GM18951 (cell line): ENCODE measurements at regions of chr15 and their contacts with region 1.

Region 1: DNA sequence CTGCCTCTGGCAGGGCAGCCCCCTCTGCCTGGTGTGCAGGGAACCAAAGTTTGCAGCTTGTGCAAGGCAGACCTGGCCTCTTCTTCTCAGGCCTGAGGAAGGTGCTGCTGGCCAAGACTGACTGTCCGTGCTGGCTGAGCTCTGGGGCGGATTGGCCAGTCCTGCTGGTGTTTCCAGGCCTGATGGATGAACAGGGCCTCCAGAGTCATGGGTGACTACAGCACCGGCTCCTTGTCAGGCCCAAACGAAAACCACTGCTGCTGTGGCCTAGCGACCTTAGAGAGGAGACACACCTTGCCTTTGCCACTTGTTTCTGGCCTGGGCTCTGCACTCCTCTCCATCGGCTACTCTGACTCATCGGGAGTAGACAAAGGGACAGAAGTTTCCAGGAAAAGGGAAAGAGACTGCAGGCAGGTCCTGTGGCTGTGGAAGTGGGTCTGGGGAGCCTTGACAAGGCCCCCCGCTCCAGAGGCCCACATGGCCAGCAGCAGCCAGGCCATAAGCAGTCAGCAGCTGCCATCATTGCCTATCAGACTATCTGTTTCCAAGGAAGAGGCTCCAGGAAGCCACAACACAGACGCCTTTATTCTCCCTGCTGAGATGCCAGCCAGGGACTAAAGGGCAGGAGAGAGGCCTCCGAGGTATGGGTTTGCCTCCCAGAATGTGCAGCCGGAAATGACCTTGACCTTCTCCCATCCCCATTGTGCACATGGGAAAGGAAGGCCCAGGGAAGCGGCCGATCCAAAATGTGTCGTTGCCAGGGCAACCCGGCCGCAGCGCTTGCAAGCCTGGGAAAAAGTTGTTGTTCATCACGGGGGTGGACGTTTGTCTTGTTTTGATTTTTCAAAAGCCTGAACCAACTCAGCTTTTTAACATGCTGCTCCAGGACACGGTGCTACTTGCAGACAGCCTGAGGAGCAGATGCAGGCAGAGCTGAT is 160.5 kb downstream of the CHSY1 start:
- POLR2A ChIP-seq: no peak

Region 2: GRCh38 chr15:101258238-101259144 is 167.1 kb after region 1 on chr15:
- in situ Hi-C with region 1: loop called (anchors 5 kb)
- POLR2A ChIP-seq: no peak